Left ventricle myocardium inferior (tissue), 1 donor: ENCODE measurements at regions of chr9 and their contacts with region 1.

Region 1: DNA sequence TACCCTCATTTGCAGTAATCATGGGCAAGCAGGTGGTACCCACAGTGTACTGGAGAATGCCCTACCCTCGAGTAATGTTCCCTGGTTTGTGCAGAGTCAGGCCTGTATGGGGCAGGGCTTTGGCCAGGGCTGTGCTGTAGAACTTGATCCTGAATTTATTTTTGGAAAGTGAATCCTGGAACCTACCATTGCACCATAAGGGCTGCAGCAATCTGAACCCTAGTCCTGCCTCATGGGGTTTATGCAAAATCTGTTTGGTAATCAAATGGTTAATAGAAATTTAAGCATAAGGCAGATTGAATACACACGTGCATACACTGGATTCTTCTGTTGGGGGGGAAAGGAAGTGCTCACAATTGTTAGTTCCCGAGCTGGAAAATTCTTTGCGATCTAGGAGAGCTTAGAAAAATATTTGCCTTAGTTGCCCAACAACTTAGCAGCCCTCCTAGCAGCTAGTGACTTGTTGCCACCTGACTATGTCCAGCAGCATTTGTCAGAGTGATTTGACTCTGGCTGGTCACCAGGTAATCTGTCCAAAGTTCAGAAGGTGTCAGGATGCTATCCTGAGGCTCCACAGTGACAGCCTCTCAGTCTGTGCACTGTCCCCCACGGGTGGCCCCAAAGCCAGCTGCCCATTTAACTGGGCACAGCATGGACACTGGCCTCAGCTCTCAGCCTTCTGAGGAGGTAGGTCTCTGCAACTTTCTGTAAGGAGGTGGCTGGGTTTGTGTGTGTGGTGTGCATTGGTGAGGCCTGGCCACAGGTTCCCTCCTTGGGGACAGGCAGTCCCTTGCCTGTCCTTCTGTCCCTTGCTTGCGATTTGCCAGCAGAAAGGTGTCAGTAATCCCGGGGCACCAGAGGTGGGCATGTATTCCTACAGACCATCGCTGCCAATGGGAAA is 8.3 kb downstream of the MVB12B start:
- DNase-seq: no peak
- H3K4me3 ChIP-seq: peak overlapping the region; percentile 34
- H3K27ac ChIP-seq: peak overlapping the region; percentile 67
- H3K4me1 ChIP-seq: peaks cover 58% of the 10 kb centered on the region
- H3K27me3 ChIP-seq: no peaks in the 10 kb centered on the region
- CTCF ChIP-seq: no peak

Region 2: GRCh38 chr9:126389992-126390391 is 55.0 kb after region 1 on chr9:
- intact Hi-C with region 1: loop called (anchors 5 kb)
- DNase-seq: no peak
- H3K4me3 ChIP-seq: no peak overlapping the region
- H3K27ac ChIP-seq: peak overlapping the region; percentile 17
- H3K4me1 ChIP-seq: peaks cover 25% of the 10 kb centered on the region
- H3K27me3 ChIP-seq: no peaks in the 10 kb centered on the region
- CTCF ChIP-seq: no peak

Region 3: GRCh38 chr9:126860077-126860756 is 525.2 kb after region 1 on chr9 and contains the start of gene ZBTB34:
- intact Hi-C with region 1: no loop called
- DNase-seq: peak; percentile 66
- H3K4me3 ChIP-seq: peak within 1 kb of the TSS; percentile 91
- H3K27ac ChIP-seq: peak within 1 kb of the TSS; percentile 96
- H3K4me1 ChIP-seq: peaks cover 45% of the 10 kb centered on the region
- H3K27me3 ChIP-seq: no peaks in the 10 kb centered on the region
- CTCF ChIP-seq: peak; percentile 100
- total RNA-seq, gene ZBTB34: 4.5 TPM

Region 4: GRCh38 chr9:126927419-126927818 is 592.4 kb after region 1 on chr9:
- intact Hi-C with region 1: no loop called
- DNase-seq: no peak
- H3K4me3 ChIP-seq: no peak overlapping the region
- H3K27ac ChIP-seq: no peak overlapping the region
- H3K4me1 ChIP-seq: no peaks in the 10 kb centered on the region
- H3K27me3 ChIP-seq: no peaks in the 10 kb centered on the region
- CTCF ChIP-seq: no peak